ENCODE measurements at regions of chr2 and their contacts with region 1.

Region 1: DNA sequence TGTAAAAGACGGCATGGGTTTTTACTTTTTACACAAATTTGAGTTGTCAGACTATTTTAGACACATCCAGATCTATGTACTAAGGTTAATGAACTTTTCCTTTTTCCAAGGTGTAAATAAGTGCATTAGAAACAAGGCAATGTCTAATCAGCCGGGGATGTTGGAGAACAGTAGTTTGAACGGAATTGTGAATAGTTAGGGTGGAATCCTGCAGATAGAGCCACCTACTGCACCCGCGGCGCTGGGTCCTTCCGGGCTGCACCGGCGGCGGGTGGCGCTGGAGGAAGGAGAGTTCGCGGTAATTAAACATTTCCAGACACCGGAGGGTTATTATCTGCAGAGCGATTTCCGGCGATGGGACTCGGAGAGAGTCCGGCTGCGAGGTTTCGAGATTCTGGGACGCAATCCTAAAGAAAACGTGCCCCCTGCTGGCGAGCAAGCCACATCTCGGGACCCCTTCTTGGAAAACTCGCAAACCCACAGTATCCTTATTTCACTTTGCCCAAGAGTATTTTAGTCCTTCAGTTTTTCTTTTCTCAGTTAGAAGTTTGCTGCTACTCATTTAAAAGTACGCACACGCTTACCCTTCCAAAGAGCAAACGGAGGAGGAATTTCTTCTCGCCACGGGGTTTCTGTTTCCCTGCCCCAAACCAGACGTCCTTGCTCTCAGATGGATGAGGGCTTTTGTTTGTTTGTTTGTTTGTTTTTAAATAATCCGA is 4.5 kb upstream of the OSR1 start:
- DNase-seq: no peak
- H3K4me3 Mint-ChIP-seq: peak overlapping the region; percentile 82
- H3K27ac Mint-ChIP-seq: no peak overlapping the region
- H3K4me1 Mint-ChIP-seq: peaks cover 25% of the 10 kb centered on the region
- H3K27me3 Mint-ChIP-seq: peaks cover 80% of the 10 kb centered on the region

Region 2: DNA sequence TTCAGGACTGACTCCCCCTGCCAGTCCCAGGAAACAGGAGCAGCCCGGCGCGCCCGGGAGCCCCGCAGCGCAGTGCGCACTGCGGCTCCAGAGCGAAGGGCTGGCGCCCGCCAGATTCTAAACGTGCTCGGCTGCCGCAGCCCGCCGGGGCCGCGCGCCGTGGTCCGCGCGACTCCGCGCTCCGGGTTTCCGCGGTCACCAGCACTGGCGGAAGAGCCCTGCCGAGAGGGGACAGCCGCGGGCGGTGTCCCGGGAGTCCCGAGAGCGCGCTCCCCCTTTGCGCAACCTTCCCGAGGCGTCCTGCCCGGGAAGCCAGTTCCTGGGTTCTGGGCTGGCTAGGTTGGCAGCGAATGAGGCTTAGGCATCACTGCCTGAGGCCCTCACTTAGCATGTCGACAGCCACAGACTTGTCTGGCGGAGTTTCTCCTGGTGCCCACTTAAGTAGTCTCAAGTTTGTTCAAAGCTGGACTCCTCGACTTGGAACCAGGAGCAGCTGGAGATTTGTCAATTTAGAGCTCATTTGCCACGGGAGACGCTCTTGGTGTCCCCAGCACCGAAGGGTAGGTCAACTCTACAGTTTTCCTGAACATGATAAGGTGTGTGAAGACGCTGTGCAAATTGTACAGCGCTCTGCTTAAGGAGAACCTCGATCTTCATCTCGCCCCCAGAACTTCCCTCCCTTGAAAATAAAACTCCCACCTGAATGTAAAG is 1823.9 kb before region 1 on chr2:
- intact Hi-C with region 1: loop called (anchors 5 kb)
- DNase-seq: no peak
- H3K4me3 Mint-ChIP-seq: no peak overlapping the region
- H3K27ac Mint-ChIP-seq: no peak overlapping the region
- H3K4me1 Mint-ChIP-seq: peaks cover 8% of the 10 kb centered on the region
- H3K27me3 Mint-ChIP-seq: peaks cover 66% of the 10 kb centered on the region

Region 3: GRCh38 chr2:18749912-18750526 is 612.9 kb before region 1 on chr2:
- intact Hi-C with region 1: loop called (anchors 5 kb)
- DNase-seq: no peak
- H3K4me3 Mint-ChIP-seq: no peak overlapping the region
- H3K27ac Mint-ChIP-seq: no peak overlapping the region
- H3K4me1 Mint-ChIP-seq: no peaks in the 10 kb centered on the region
- H3K27me3 Mint-ChIP-seq: no peaks in the 10 kb centered on the region

Region 4: GRCh38 chr2:19321946-19322345 is 41.0 kb before region 1 on chr2:
- intact Hi-C with region 1: no loop called
- DNase-seq: no peak
- H3K4me3 Mint-ChIP-seq: no peak overlapping the region
- H3K27ac Mint-ChIP-seq: no peak overlapping the region
- H3K4me1 Mint-ChIP-seq: no peaks in the 10 kb centered on the region
- H3K27me3 Mint-ChIP-seq: peaks cover 2% of the 10 kb centered on the region